ENCODE measurements at regions of chr12 and their contacts with region 1.

Region 1: GRCh38 chr12:122051231-122051876 is 27.2 kb upstream of the MLXIP start:
- DNase-seq: no peak
- H3K4me3 ChIP-seq: no peak overlapping the region
- H3K27ac ChIP-seq: peak overlapping the region; percentile 44 to 75 (median 65)
- H3K4me1 ChIP-seq: peaks cover 12 to 31% (median 16%) of the 10 kb centered on the region in 4 donors
- H3K27me3 ChIP-seq: no peaks in the 10 kb centered on the region
- CTCF ChIP-seq: no peak
- EP300 ChIP-seq: no peak
- POLR2A ChIP-seq: no peak

Region 2: DNA sequence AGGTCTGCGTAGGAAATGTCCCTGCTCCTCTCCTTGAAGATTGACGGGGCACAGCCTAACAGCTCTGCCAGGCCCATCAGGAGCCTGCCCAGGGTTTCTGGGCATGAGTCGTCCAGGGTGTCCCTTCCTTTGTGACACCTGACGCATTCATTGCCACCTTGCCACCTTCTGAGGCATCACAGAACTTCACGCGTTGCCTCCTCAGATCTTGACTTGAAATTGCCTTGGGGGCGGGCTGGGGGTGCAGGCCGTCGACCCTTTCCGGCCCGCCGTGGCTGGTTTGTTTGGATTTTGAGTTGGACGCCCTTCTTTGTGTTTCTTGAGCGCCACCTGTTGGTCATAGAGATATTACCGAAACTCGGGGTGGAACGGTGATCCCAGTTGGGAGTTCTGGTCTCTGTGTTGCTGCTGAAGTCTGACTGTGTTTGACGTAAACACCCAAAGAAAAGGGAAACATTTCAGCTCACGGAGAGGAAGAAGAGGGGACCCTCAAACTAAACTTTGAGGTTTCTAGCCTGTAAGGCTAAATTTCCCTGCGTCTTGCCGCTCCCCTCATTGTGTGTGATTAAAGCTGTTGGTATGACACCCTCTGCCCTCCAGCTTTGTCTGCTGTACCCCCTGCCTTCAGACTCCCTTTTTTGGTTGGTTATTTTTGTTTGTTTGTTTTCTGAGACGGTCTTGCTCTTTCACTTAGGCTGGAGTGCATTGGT is 71.9 kb after region 1 on chr12:
- in situ Hi-C with region 1: loop called (anchors 5 to 10 kb)
- intact Hi-C with region 1: loop called (anchors 2 kb)
- DNase-seq: peak; percentile 83
- H3K4me3 ChIP-seq: no peak overlapping the region
- H3K27ac ChIP-seq: peak overlapping the region; percentile 58 to 80 (median 76)
- H3K4me1 ChIP-seq: peaks cover 51 to 78% (median 72%) of the 10 kb centered on the region in 4 donors
- H3K27me3 ChIP-seq: no peaks in the 10 kb centered on the region
- CTCF ChIP-seq: peak; percentile 73 to 93 (median 81)
- EP300 ChIP-seq: no peak
- POLR2A ChIP-seq: no peak